Activated naive CD4-positive, alpha-beta T cell treated with anti-CD3 and anti-CD28 coated beads for 36 hours (primary cell): ENCODE measurements at regions of chr1 and their contacts with region 1.

Region 1: DNA sequence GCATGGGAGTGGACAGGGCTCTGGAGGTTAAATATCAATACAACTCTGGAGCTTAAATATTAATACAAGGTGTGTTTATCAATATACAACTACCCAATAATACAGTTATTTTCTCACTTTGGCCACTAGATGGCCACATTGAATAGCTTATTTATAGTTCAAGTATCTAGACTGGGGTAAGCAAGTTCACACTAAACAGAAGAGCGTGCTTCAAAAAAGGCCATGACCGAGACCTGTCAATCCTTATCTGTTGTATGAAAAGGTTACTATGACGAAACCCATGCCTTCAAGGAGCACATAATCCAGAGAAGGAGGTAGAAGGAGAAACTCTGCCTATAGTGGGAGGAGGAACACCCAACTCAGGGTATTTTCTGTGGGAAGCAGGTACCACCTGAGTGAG is 29.1 kb downstream of the CHML start:
- DNase-seq: peak; percentile 11
- H3K4me3 Mint-ChIP-seq: no peak overlapping the region
- H3K27ac Mint-ChIP-seq: no peak overlapping the region
- H3K4me1 Mint-ChIP-seq: peaks cover 15% of the 10 kb centered on the region
- H3K27me3 Mint-ChIP-seq: no peaks in the 10 kb centered on the region

Region 2: GRCh38 chr1:241323514-241324195 is 287.4 kb before region 1 on chr1:
- CTCF ChIA-PET with region 1: no interaction called
- intact Hi-C with region 1: no loop called
- DNase-seq: peak; percentile 53
- H3K4me3 Mint-ChIP-seq: no peak overlapping the region
- H3K27ac Mint-ChIP-seq: no peak overlapping the region
- H3K4me1 Mint-ChIP-seq: no peaks in the 10 kb centered on the region
- H3K27me3 Mint-ChIP-seq: no peaks in the 10 kb centered on the region

Region 3: DNA sequence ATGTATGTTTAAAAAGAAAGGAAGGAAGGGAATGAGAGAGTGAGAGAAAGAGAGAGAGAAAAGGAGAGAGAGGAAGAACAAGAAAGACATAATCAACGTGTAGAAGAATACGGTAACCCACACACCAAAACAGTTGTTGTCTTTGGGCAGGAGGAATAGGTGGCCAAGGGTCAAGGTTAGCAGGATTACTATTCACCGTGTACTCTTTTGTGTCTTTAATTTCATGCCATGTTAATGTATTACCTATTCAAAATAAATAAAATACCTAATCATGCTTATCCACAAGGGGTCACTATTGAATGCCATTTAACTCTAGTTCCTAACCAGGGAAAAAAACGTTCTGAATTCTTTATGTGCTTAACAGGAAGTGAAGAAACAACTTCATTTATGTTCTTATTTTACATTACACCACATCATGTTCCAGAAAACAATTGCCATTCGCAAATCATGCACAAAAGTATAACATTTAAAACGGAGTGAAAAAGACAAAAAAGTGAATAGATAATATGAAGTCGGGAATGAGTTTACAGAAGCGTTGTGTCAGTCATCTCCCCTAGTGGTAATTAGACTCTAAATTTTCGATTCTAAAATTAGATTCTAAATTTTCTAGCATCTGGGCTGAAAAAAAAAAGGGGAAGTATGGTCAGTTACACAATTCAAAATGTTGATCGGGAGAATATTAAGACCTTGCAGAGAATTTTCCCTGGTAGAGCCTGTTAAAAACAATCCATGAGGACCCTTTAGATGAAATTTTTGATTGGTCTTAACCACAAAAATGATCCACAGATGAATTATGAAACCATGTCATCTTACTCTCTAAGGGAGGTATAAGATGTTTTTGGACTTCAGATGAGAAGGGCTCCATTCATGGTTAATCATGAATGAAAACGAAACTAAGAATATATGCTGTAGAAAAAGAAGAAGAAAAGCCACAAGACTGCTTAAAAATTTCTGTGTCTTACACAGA is 79.6 kb before region 1 on chr1:
- CTCF ChIA-PET with region 1: interaction called, 6 read pairs
- intact Hi-C with region 1: loop called (anchors 1 kb)
- DNase-seq: no peak
- H3K4me3 Mint-ChIP-seq: peak overlapping the region; percentile 85
- H3K27ac Mint-ChIP-seq: peak overlapping the region; percentile 92
- H3K4me1 Mint-ChIP-seq: peaks cover 15% of the 10 kb centered on the region
- H3K27me3 Mint-ChIP-seq: no peaks in the 10 kb centered on the region

Region 4: GRCh38 chr1:241627453-241628259 is 16.6 kb after region 1 on chr1:
- CTCF ChIA-PET with region 1: interaction called, 19 read pairs
- intact Hi-C with region 1: loop called (anchors 1 kb)
- DNase-seq: peak; percentile 69
- H3K4me3 Mint-ChIP-seq: peak overlapping the region; percentile 49
- H3K27ac Mint-ChIP-seq: peak overlapping the region; percentile 79
- H3K4me1 Mint-ChIP-seq: peaks cover 31% of the 10 kb centered on the region
- H3K27me3 Mint-ChIP-seq: no peaks in the 10 kb centered on the region

Region 5: GRCh38 chr1:241810769-241811405 is 199.8 kb after region 1 on chr1:
- CTCF ChIA-PET with region 1: no interaction called
- intact Hi-C with region 1: no loop called
- DNase-seq: no peak
- H3K4me3 Mint-ChIP-seq: no peak overlapping the region
- H3K27ac Mint-ChIP-seq: no peak overlapping the region
- H3K4me1 Mint-ChIP-seq: no peaks in the 10 kb centered on the region
- H3K27me3 Mint-ChIP-seq: peaks cover 3% of the 10 kb centered on the region

Region 6: GRCh38 chr1:241834733-241835377 is 223.8 kb after region 1 on chr1:
- CTCF ChIA-PET with region 1: interaction called, 17 read pairs
- intact Hi-C with region 1: loop called (anchors 1 kb)
- DNase-seq: no peak
- H3K4me3 Mint-ChIP-seq: no peak overlapping the region
- H3K27ac Mint-ChIP-seq: no peak overlapping the region
- H3K4me1 Mint-ChIP-seq: peaks cover 11% of the 10 kb centered on the region
- H3K27me3 Mint-ChIP-seq: no peaks in the 10 kb centered on the region

Region 7: GRCh38 chr1:241847796-241848685 is 237.0 kb after region 1 on chr1 and contains the start of gene EXO1:
- CTCF ChIA-PET with region 1: interaction called, 13 read pairs
- intact Hi-C with region 1: loop called (anchors 1 kb)
- DNase-seq: peak; percentile 93
- H3K4me3 Mint-ChIP-seq: peak within 1 kb of the TSS; percentile 98
- H3K27ac Mint-ChIP-seq: peak within 1 kb of the TSS; percentile 99
- H3K4me1 Mint-ChIP-seq: peaks cover 22% of the 10 kb centered on the region
- H3K27me3 Mint-ChIP-seq: peaks cover 1% of the 10 kb centered on the region
- total RNA-seq, gene EXO1: 55.3 to 59.6 TPM

Region 8: DNA sequence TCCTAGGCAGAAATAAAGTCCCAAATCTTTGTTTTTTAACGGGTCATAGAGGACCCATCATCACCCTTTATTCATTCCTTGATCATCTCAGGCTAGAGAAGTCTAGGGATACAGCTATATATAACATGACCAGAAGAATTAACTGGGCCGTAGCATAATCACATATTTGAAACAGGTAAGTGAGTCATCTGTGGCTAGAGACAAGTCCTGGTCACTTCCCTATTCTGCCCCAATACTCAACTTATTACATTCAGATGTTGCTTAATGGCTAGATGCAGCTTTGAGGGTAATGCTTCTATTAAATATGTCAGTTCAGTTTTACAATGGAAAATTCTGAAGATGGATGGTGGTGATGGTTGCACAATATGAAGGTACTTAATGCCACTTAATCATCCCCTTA is 283.9 kb after region 1 on chr1:
- CTCF ChIA-PET with region 1: interaction called, 4 read pairs
- intact Hi-C with region 1: loop called (anchors 1 kb)
- DNase-seq: no peak
- H3K4me3 Mint-ChIP-seq: no peak overlapping the region
- H3K27ac Mint-ChIP-seq: no peak overlapping the region
- H3K4me1 Mint-ChIP-seq: no peaks in the 10 kb centered on the region
- H3K27me3 Mint-ChIP-seq: no peaks in the 10 kb centered on the region

Region 9: DNA sequence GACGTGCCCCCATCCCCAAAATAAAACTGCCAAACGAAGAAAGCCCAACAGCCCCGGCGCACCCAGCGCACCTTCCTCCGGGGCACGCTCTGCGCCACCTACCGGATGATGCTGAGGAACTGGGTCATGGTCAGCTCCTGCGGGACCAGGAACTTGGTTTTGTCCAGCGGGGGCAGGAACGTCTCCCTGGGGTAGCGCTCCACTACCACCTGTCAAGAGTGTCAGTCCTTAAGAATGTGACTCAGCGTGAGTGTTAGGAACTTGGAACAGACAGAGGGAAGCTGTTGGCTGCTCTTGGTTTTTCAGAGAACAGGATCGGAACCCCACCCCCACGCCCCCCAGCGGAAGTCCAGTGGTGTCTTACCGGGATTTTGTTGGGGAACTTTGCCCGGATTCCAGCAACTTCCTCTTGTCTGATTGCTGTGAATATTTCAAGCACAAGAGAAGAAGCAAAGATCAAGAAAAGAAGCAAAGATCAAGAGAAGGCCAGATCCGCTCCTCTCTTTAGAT is 387.4 kb after region 1 on chr1:
- CTCF ChIA-PET with region 1: interaction called, 20 read pairs
- intact Hi-C with region 1: loop called (anchors 1 kb)
- DNase-seq: peak; percentile 68
- H3K4me3 Mint-ChIP-seq: peak overlapping the region; percentile 54
- H3K27ac Mint-ChIP-seq: no peak overlapping the region
- H3K4me1 Mint-ChIP-seq: peaks cover 3% of the 10 kb centered on the region
- H3K27me3 Mint-ChIP-seq: peaks cover 1% of the 10 kb centered on the region